PC-9 (cell line): ENCODE measurements at regions of chr12 and their contacts with region 1.

Region 1: DNA sequence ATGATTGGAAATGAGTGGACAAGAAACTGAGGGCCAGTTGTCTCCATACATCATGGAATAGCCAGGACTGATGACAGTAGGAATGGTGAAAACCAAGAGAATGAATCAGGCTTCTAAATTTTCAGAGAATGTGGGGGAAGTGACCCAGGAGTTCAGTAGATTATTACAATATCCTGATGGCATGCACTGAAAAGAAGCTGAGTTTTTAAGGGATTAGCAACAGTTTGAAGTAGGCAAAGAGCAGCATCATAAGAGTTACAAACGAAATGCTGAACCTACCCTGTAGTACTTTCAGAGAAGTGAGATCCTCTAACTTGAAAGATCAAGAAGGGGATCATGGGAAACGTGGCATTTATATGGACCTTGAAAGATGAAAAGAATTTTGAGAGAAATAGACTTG is 13.2 kb downstream of the SLC2A14 start:
- DNase-seq: no peak
- H3K4me3 ChIP-seq: no peak overlapping the region
- H3K27ac ChIP-seq: no peak overlapping the region
- H3K4me1 ChIP-seq: peaks cover 14% of the 10 kb centered on the region
- H3K27me3 ChIP-seq: no peaks in the 10 kb centered on the region
- CTCF ChIP-seq: no peak

Region 2: DNA sequence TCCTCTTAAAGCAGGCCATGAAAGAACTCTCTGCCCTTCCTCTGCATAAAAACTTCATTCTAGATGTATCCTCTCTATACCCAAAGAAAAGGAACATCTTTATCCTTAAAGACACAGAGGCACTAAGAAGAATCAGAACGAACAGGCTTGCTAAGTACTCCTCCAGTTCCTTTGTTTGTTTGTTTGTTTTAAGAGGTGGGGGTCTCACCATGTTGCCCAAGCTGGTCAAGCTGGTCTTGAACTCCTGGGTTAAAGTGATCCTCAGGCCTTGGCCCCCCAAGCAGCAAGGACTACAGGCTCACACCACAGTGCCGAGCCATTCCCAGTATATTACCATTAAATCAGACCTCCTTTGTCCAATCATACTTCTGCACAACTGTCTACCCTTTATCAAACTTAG is 178.0 kb before region 1 on chr12:
- CTCF ChIA-PET with region 1: no interaction called
- POLR2A ChIA-PET with region 1: no interaction called
- intact Hi-C with region 1: no loop called
- DNase-seq: no peak
- H3K4me3 ChIP-seq: no peak overlapping the region
- H3K27ac ChIP-seq: no peak overlapping the region
- H3K4me1 ChIP-seq: no peaks in the 10 kb centered on the region
- H3K27me3 ChIP-seq: no peaks in the 10 kb centered on the region
- CTCF ChIP-seq: no peak

Region 3: GRCh38 chr12:7907009-7907408 is 47.5 kb after region 1 on chr12:
- CTCF ChIA-PET with region 1: interaction called, 3 read pairs
- POLR2A ChIA-PET with region 1: interaction called, 15 read pairs
- intact Hi-C with region 1: loop called (anchors 1 kb)
- DNase-seq: peak; percentile 81 to 92
- H3K4me3 ChIP-seq: no peak overlapping the region
- H3K27ac ChIP-seq: 0 out of 2 replicates have a peak overlapping the region, but pooled peaks have one; percentile 23
- H3K4me1 ChIP-seq: peaks cover 23% of the 10 kb centered on the region
- H3K27me3 ChIP-seq: no peaks in the 10 kb centered on the region
- CTCF ChIP-seq: peak; percentile 69

Region 4: DNA sequence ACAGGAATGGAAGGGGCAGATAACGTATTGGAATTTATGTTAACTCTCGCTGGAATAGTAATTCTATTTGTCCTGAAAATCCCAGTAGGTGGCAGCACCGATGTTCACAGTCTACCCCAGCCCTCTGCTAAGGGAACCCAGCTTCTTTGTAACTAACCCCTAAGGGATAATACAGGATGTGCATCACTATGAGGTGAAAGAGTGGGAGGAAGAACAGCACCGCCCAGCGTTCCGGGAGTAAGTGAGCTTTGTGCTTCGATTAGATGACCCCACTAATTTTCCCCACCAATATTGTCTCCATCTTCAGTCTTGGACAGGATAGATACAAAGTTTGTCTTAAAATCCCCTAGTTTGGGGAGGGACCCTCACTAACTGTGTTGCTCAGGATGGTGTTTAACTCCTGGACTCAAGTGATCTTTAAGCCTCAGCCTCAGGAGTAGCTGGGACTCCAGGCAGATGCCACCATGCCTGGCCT is 73.7 kb after region 1 on chr12:
- CTCF ChIA-PET with region 1: interaction called, 25 read pairs
- POLR2A ChIA-PET with region 1: interaction called, 5 read pairs
- intact Hi-C with region 1: loop called (anchors 1 kb)
- DNase-seq: peak; percentile 79 to 90
- H3K4me3 ChIP-seq: peak overlapping the region; percentile 59
- H3K27ac ChIP-seq: peak overlapping the region; percentile 33; the same call in 1 of the 2 replicates
- H3K4me1 ChIP-seq: peaks cover 44% of the 10 kb centered on the region
- H3K27me3 ChIP-seq: no peaks in the 10 kb centered on the region
- CTCF ChIP-seq: peak; percentile 85

Region 5: DNA sequence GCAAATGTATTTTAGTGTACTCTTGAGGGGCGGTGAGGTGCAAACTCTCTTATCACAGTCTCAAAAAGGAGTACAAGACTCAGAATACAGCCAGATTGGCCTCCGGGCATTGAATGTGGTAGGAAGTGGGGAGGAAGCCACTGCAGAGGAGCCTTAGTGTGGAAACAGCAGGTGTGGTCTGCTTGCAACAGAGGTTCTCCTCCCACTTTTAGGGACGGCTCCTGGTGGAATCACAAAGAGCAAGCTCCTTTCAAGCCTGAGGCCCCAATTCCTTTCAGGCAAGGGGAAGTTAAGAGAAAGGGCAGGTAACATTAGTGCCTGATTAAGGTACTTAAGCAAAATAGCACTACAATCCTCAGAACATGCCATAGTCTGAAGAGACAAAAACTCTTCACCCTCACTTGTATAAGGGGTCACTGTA is 100.2 kb after region 1 on chr12:
- CTCF ChIA-PET with region 1: interaction called, 4 read pairs
- POLR2A ChIA-PET with region 1: interaction called, 7 read pairs
- intact Hi-C with region 1: loop called (anchors 1 kb)
- DNase-seq: peak; percentile 81 to 96
- H3K4me3 ChIP-seq: peak overlapping the region; percentile 63; the same call in 1 of the 2 replicates
- H3K27ac ChIP-seq: peak overlapping the region; percentile 75
- H3K4me1 ChIP-seq: peaks cover 35% of the 10 kb centered on the region
- H3K27me3 ChIP-seq: no peaks in the 10 kb centered on the region
- CTCF ChIP-seq: no peak

Region 6: GRCh38 chr12:7970475-7971252 is 111.1 kb after region 1 on chr12:
- CTCF ChIA-PET with region 1: no interaction called
- POLR2A ChIA-PET with region 1: no interaction called
- intact Hi-C with region 1: no loop called
- DNase-seq: peak; percentile 90 to 98
- H3K4me3 ChIP-seq: peak overlapping the region; percentile 58
- H3K27ac ChIP-seq: peak overlapping the region; percentile 65
- H3K4me1 ChIP-seq: peaks cover 18% of the 10 kb centered on the region
- H3K27me3 ChIP-seq: no peaks in the 10 kb centered on the region
- CTCF ChIP-seq: no peak

Region 7: GRCh38 chr12:8045952-8046944 is 186.7 kb after region 1 on chr12:
- CTCF ChIA-PET with region 1: interaction called, 4 read pairs
- POLR2A ChIA-PET with region 1: interaction called, 22 read pairs
- intact Hi-C with region 1: no loop called
- DNase-seq: peak; percentile 72 to 76
- H3K4me3 ChIP-seq: no peak overlapping the region
- H3K27ac ChIP-seq: no peak overlapping the region
- H3K4me1 ChIP-seq: no peaks in the 10 kb centered on the region
- H3K27me3 ChIP-seq: no peaks in the 10 kb centered on the region
- CTCF ChIP-seq: peak; percentile 95

Region 8: DNA sequence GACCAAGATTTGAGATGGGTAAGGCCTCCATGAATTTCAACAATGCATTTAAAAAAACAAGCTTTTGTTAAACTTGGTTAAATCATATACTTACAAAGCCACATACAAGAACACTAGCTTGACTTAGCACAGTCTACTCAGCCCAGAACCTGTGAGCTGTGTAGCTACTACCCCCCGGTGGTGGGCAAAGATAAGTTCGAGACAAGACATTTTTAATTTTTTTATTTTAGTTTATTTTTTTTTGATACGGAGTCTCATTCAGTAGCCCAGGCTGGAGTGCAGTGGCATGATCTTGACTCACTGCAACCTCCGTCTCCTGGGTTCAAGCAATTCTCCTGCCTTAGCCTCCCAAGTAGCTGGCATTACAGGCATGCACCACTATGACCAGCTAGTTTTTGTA is 218.8 kb after region 1 on chr12:
- CTCF ChIA-PET with region 1: no interaction called
- POLR2A ChIA-PET with region 1: no interaction called
- intact Hi-C with region 1: loop called (anchors 1 kb)
- DNase-seq: peak; percentile 39 to 62
- H3K4me3 ChIP-seq: no peak overlapping the region
- H3K27ac ChIP-seq: no peak overlapping the region
- H3K4me1 ChIP-seq: peaks cover 43% of the 10 kb centered on the region
- H3K27me3 ChIP-seq: no peaks in the 10 kb centered on the region
- CTCF ChIP-seq: peak; percentile 67